Heart left ventricle (tissue), 16 donors: ENCODE measurements at regions of chr15 and their contacts with region 1.

Region 1: GRCh38 chr15:97159056-97159455 is 801.4 kb upstream of the ARRDC4 start:
- DNase-seq: no peak
- ATAC-seq: no peak
- H3K4me3 ChIP-seq: no peak overlapping the region
- H3K27ac ChIP-seq: no peak overlapping the region
- H3K4me1 ChIP-seq: no peaks in the 10 kb centered on the region
- H3K27me3 ChIP-seq: peaks cover 0 to 3% (median 0%) of the 10 kb centered on the region in 9 donors
- CTCF ChIP-seq: no peak
- POLR2A ChIP-seq: no peak

Region 2: DNA sequence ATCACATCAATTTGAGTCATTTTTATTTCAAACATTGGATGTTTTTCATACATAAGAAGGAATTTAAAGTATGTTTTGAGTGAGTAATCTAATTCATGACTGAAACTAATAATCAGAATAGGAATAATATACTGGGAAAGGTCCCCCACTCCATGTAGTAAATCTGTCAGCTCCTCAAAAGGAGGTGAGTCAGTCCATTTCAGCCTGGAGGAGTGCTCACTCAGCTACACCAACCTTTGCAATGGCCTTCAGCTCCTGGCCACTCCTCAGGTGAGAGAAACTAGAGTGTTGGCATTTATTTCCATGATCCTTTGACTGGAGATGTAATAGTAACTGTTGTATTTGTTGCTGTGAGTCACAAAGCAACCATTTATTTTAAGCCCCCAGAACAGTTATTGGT is 56.6 kb after region 1 on chr15:
- intact Hi-C with region 1: loop called in 1 of 10 experiments (anchors 10 kb)
- DNase-seq: no peak
- ATAC-seq: no peak
- H3K4me3 ChIP-seq: no peak overlapping the region
- H3K27ac ChIP-seq: no peak overlapping the region
- H3K4me1 ChIP-seq: no peaks in the 10 kb centered on the region
- H3K27me3 ChIP-seq: no peaks in the 10 kb centered on the region
- CTCF ChIP-seq: no peak
- POLR2A ChIP-seq: no peak